PC-9 (cell line): ENCODE measurements at regions of chr17 and their contacts with region 1.

Region 1: DNA sequence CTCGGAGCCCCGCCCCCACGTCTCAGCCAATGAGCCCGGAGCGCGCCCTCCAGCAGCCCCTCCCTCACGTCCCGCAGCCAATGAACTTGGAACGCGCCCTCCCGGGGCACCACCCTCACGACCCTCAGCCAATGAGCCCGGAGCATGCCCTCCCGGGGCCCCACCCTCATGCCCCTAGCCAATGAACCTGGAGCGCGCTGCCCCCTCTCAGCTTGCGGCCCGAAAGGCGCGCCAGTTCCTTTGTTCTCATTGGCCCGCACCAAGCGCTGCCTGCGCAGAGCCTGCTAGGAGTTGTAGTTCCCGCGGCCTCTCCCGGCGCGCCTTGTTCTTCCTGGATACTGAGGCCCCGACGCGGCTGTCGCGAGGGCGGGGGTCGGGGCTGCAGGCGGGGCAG is at the start of gene LRRC45:
- DNase-seq: peak; percentile 92 to 100
- H3K4me3 ChIP-seq: peak within 1 kb of the TSS; percentile 84
- H3K27ac ChIP-seq: no peak within 1 kb of the TSS
- H3K4me1 ChIP-seq: peaks cover 6% of the 10 kb centered on the region; the same call in 1 of the 2 replicates
- H3K27me3 ChIP-seq: no peaks in the 10 kb centered on the region
- CTCF ChIP-seq: no peak
- total RNA-seq, gene LRRC45: 41.5 and 42.6 TPM in 2 replicates

Region 2: DNA sequence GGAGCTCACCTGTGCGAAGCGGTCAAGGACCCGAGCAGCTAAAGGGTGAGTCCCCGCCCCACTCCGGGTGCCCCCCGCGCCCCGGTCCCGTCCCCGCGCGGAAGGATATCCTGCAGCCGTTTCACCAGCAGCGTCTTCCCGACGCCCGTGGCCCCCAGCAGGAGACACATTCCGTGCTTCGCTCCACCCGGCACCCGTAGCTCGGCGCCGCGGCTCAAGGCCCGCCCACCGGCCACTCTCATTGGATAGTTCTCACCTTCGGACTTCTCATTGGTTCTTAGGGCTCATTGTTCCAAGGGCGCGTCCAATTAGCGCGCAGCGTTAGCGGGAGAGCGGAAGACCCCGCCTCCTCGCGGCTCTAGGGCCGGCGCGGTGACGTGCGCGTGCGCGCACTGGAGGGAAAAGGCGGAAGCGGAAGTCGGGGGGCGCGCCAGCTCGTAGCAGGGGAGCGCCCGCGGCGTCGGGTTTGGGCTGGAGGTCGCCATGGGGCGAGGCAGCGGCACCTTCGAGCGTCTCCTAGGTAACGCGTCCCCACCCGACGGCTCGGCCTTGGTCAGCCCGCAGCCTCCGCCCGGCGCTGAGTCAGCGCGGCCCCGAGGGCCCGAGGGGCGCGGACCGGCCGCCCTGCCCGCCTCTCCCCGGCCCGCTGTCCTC is 339.3 kb before region 1 on chr17 and contains the starts of genes ARL16 and HGS:
- CTCF ChIA-PET with region 1: no interaction called
- POLR2A ChIA-PET with region 1: no interaction called
- intact Hi-C with region 1: loop called (anchors 5 kb)
- DNase-seq: peak; percentile 90 to 99
- H3K4me3 ChIP-seq: peak within 1 kb of the TSS; percentile 93
- H3K27ac ChIP-seq: peak within 1 kb of the TSS; percentile 78
- H3K4me1 ChIP-seq: peaks cover 5% of the 10 kb centered on the region
- H3K27me3 ChIP-seq: no peaks in the 10 kb centered on the region
- CTCF ChIP-seq: no peak
- total RNA-seq, gene ARL16: 41.7 and 48.3 TPM in 2 replicates
- total RNA-seq, gene HGS: 149 and 166 TPM in 2 replicates

Region 3: GRCh38 chr17:81911277-81911961 is 111.6 kb before region 1 on chr17 and contains the start of gene PCYT2:
- CTCF ChIA-PET with region 1: interaction called, 3 read pairs
- POLR2A ChIA-PET with region 1: no interaction called
- intact Hi-C with region 1: loop called (anchors 2 kb)
- DNase-seq: peak; percentile 63 to 97
- H3K4me3 ChIP-seq: peak within 1 kb of the TSS; percentile 67
- H3K27ac ChIP-seq: peak within 1 kb of the TSS; percentile 59; the same call in 1 of the 2 replicates
- H3K4me1 ChIP-seq: peaks cover 35% of the 10 kb centered on the region
- H3K27me3 ChIP-seq: no peaks in the 10 kb centered on the region
- CTCF ChIP-seq: no peak; the same call in 1 of the 2 replicates
- total RNA-seq, gene PCYT2: 54.7 and 82.2 TPM in 2 replicates

Region 4: GRCh38 chr17:81959362-81960129 is 63.4 kb before region 1 on chr17:
- CTCF ChIA-PET with region 1: interaction called, 18 read pairs
- POLR2A ChIA-PET with region 1: interaction called, 5 read pairs
- intact Hi-C with region 1: loop called (anchors 1 kb)
- DNase-seq: peak in 1 of 2 experiments; percentile 74
- H3K4me3 ChIP-seq: no peak overlapping the region; the same call in 1 of the 2 replicates
- H3K27ac ChIP-seq: no peak overlapping the region
- H3K4me1 ChIP-seq: peaks cover 6% of the 10 kb centered on the region; the same call in 1 of the 2 replicates
- H3K27me3 ChIP-seq: no peaks in the 10 kb centered on the region
- CTCF ChIP-seq: peak; percentile 30; the same call in 1 of the 2 replicates

Region 5: DNA sequence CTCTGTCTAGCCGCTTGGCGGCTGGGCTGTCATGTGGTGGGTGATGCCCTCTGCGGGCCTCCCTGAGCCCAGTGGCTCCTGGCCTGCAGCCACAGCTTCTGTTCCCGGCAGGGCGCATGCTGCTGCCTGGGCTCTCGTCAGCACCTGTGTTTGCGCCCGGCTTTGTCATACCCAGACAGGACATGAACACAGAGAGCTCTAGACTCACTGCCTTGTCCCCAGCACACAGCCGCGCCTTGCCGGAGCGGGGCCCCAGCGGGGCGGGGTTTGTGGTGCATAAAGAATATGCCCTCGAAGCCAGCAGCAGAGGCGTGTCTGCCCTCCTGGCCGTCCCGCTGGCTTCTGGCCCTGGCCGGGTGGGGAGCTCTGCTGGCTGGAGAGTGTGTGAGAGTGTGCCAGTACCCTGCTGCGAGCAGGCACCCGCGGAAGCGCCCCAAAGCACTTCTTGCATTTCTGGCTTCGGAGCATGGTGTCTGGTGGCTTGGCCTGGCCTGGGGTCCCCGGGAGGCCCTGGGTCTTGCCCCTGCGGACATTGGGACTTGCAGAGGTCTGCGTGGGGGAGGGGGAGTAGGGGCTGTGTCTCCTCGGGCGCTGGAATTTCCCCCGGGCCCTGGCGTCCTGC is 31.2 kb before region 1 on chr17:
- CTCF ChIA-PET with region 1: interaction called, 10 read pairs
- POLR2A ChIA-PET with region 1: no interaction called
- intact Hi-C with region 1: no loop called
- DNase-seq: peak in 1 of 2 experiments; percentile 95
- H3K4me3 ChIP-seq: no peak overlapping the region
- H3K27ac ChIP-seq: no peak overlapping the region
- H3K4me1 ChIP-seq: no peaks in the 10 kb centered on the region
- H3K27me3 ChIP-seq: no peaks in the 10 kb centered on the region
- CTCF ChIP-seq: no peak

Region 6: GRCh38 chr17:82037113-82037888 is 14.3 kb after region 1 on chr17 and contains the start of gene DCXR:
- CTCF ChIA-PET with region 1: interaction called, 10 read pairs
- POLR2A ChIA-PET with region 1: no interaction called
- intact Hi-C with region 1: no loop called
- DNase-seq: peak; percentile 85 to 98
- H3K4me3 ChIP-seq: peak within 1 kb of the TSS; percentile 66
- H3K27ac ChIP-seq: no peak within 1 kb of the TSS
- H3K4me1 ChIP-seq: 0 out of 2 replicates have a peak, but pooled peaks cover 6% of the 10 kb centered on the region
- H3K27me3 ChIP-seq: no peaks in the 10 kb centered on the region
- CTCF ChIP-seq: peak; percentile 61
- total RNA-seq, gene DCXR: 120 and 129 TPM in 2 replicates

Region 7: DNA sequence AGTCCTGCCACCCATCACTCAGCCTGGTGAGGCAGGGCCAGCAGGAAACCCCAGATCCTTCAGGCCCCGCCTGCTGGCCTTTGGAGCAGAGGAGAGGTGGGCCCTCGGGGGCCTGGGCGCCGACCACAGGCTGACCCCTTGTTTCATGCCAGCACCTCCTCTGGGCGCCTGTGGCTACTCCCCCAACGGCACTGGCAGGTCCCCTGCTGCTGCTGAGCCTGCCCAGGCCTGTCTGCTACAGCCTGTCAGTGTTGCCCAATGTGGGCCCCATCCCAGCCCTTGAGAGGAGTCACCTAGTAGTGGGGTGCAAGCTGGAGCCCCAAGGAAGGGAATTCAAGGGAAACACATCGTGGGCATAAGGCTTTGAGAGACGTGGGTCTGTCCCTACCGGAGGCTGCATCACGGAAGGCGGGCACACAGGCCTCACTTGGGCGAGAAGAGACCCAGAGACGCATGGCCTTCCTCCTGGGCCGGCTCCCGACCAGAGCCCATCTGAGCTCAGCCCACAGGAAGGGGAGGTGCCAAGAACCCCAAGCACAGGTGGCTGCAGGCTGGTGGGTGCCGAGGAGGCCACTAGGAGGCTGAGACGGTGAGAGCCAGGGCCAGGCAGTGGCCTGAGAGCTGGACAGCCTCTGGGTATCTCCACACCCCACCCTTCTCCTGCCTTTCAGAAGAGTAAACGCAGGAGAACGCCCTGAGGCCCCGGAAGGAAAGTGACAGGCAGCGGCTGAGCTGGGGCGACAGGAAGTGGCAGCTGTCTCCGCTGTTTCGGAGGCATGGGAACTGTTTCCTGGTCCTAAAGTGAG is 83.1 kb after region 1 on chr17:
- CTCF ChIA-PET with region 1: interaction called, 11 read pairs
- POLR2A ChIA-PET with region 1: interaction called, 3 read pairs
- intact Hi-C with region 1: no loop called
- DNase-seq: peak; percentile 94 to 97
- H3K4me3 ChIP-seq: peak overlapping the region; percentile 54
- H3K27ac ChIP-seq: peak overlapping the region; percentile 71
- H3K4me1 ChIP-seq: peaks cover 70% of the 10 kb centered on the region
- H3K27me3 ChIP-seq: no peaks in the 10 kb centered on the region
- CTCF ChIP-seq: peak; percentile 53